Heart left ventricle (tissue), 16 donors: ENCODE measurements at regions of chr2 and their contacts with region 1.

Region 1: DNA sequence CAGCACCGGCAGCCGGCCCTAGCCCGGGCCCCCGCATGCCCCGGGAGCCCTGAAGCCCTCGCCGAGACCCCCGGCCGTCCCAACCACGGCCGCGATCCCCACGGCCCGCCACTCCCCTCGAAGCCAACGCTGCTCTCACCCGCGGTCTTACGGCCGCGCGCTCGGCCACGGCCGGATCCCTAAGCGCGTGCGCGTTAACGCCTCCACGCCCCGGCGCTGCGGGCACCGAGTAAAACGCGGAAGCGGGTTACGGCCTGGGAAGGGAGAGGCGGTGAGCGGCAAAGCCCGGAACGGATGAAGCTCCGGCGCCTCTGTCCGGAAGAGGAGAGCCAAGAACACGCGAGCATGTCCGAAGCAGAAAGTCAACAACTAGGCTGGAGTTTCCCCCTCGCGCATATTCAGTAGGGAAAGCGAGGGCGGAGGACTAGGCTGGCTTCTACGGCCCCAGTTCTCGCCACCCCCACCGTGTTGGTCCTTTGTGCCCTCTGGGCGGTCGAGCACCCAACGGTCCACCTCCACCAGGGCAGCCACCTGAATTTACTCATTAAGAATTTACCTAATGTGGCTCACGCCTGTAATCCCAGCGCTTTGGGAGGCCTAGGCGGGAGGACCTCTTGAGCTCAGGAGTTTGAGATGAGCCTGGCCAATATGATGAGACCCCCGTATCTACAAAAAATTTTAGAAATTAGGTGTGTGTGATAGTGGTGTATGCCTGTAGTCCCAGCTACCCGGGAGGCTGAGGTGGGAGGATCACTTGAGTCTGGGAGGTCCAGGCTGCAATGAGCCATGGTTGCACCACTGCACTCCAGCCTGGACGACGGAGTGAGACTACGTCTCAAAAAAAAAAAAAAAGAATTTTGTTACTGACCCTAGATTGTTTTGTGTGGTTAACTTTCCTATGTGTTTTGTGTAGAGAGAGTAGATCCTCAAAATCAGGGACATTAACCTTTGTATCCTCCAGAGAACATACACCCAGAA is at the start of gene KANSL3:
- DNase-seq: peak; percentile 91 to 96 (median 92)
- ATAC-seq: peak; percentile 81 to 94 (median 88)
- H3K4me3 ChIP-seq: peak within 1 kb of the TSS; percentile 21 to 91 (median 71)
- H3K27ac ChIP-seq: peak within 1 kb of the TSS; percentile 86 to 99 (median 95)
- H3K4me1 ChIP-seq: peaks cover 0 to 42% (median 31%) of the 10 kb centered on the region in 12 donors
- H3K27me3 ChIP-seq: no peaks in the 10 kb centered on the region
- CTCF ChIP-seq: peak in 1 of 12 donors; percentile 4
- POLR2A ChIP-seq: peak; percentile 20 to 69
- total RNA-seq, gene KANSL3: 22.7 to 38.0 (median 30.7) TPM

Region 2: GRCh38 chr2:96536445-96537065 is 101.9 kb before region 1 on chr2 and contains the start of gene ARID5A:
- intact Hi-C with region 1: loop called in 2 of 10 experiments (anchors 5 kb)
- DNase-seq: peak; percentile 95 to 98 (median 96)
- ATAC-seq: peak; percentile 69 to 82 (median 77)
- H3K4me3 ChIP-seq: peak within 1 kb of the TSS; percentile 84 to 99 (median 97)
- H3K27ac ChIP-seq: peak within 1 kb of the TSS; percentile 85 to 100 (median 98)
- H3K4me1 ChIP-seq: peaks cover 22 to 88% (median 74%) of the 10 kb centered on the region in 12 donors
- H3K27me3 ChIP-seq: no peaks in the 10 kb centered on the region
- CTCF ChIP-seq: peak in 10 of 12 donors; percentile 25 to 60 (median 42)
- POLR2A ChIP-seq: peak; percentile 99 to 100
- total RNA-seq, gene ARID5A: 13.3 to 50.2 (median 28.2) TPM

Region 3: DNA sequence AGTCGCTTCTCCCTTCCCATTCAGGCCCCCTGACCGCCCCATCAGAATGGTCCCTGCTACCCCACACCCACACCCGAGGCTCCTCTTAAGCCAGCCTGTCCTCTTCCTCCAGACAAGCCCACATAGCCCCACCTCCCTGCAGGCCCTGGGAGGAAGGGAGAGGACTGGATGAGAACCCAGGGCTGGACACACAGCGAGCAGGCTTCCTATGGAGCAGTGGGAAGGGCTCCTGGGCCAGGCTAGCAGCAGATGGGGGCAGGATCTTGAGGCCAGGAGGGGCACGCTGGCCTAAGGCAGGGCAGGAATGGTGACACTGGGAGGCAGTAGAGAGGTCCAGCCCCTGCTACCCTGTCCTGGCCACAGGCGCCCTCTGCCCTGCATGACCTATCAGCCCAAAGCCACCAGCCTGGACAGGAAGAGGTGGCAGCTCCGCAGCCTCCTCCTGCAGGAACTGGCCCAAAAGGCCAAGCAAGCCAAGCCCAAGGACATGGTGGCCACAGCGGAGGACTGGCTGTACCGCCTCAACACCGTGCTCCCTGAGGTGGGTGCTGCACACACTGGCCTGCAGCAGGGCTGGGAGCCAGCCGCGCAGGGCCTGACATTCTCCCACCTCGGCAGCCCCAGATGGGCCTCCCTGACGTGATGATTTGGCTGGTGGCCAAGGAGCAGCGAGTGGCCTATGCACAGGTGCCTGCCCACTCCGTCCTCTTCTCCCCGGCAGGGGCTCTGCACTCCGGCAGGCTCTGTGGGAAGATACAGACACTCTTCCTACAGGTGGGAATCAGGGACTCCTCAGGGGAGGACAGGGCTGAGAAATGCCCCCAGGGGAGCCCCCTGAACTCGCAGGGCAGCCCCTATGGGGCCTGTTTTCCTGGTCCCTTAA is 47.4 kb after region 1 on chr2:
- intact Hi-C with region 1: no loop called
- DNase-seq: peak in 4 of 5 donors; percentile 36 to 61 (median 48)
- ATAC-seq: peak; percentile 50 to 70 (median 61)
- H3K4me3 ChIP-seq: no peak overlapping the region
- H3K27ac ChIP-seq: no peak overlapping the region
- H3K4me1 ChIP-seq: peaks cover 0 to 15% (median 10%) of the 10 kb centered on the region in 12 donors
- H3K27me3 ChIP-seq: no peaks in the 10 kb centered on the region
- CTCF ChIP-seq: peak in 1 of 12 donors; percentile 6
- POLR2A ChIP-seq: no peak

Region 4: DNA sequence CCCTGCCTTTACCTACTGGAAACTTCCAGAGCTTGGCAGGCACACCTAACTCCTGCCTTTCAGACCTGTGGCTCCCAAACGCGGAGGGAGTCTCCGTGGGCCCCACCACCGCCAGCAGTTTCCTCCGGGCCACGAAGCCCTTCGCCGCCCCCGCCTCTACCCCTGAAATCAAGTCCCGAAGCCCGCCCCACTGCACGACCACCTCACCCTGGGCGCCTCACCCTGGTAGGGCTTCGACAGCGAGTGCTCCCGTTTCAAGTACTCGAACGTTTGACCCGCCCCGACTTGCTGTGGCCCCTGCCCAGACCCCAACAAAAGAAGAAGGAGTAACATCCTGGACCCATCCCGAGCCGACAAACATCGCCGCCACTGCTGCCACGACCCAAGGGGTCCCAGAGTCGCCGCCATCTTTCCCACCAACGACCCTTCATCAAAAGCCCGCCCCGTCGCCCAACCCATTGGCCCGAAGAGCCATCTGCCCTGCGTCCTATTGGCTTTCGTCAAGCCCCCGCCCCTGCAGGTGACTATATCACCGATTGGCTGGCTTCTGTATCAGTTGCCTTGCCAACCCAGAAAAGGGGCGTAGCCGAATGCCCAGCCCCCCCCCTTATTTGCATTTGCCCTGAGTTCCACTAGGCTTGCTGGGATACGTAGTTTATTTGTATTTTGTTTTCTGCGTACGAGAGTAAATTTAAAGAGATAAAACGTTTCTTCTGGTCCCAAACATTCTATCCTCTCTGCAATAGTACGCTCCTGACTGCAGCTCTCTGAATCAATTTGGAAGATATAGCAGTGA is 101.4 kb after region 1 on chr2 and contains the start of gene LMAN2L:
- intact Hi-C with region 1: loop called (anchors 5 to 10 kb)
- DNase-seq: peak; percentile 97 to 99 (median 99)
- ATAC-seq: peak; percentile 99 to 100 (median 99)
- H3K4me3 ChIP-seq: peak within 1 kb of the TSS; percentile 61 to 96 (median 79)
- H3K27ac ChIP-seq: peak within 1 kb of the TSS in 11 of 12 donors; percentile 60 to 80 (median 75)
- H3K4me1 ChIP-seq: peaks cover 0 to 40% (median 26%) of the 10 kb centered on the region in 12 donors
- H3K27me3 ChIP-seq: no peaks in the 10 kb centered on the region
- CTCF ChIP-seq: no peak
- POLR2A ChIP-seq: no peak
- total RNA-seq, gene LMAN2L: 15.1 to 27.8 (median 20.5) TPM

Region 5: DNA sequence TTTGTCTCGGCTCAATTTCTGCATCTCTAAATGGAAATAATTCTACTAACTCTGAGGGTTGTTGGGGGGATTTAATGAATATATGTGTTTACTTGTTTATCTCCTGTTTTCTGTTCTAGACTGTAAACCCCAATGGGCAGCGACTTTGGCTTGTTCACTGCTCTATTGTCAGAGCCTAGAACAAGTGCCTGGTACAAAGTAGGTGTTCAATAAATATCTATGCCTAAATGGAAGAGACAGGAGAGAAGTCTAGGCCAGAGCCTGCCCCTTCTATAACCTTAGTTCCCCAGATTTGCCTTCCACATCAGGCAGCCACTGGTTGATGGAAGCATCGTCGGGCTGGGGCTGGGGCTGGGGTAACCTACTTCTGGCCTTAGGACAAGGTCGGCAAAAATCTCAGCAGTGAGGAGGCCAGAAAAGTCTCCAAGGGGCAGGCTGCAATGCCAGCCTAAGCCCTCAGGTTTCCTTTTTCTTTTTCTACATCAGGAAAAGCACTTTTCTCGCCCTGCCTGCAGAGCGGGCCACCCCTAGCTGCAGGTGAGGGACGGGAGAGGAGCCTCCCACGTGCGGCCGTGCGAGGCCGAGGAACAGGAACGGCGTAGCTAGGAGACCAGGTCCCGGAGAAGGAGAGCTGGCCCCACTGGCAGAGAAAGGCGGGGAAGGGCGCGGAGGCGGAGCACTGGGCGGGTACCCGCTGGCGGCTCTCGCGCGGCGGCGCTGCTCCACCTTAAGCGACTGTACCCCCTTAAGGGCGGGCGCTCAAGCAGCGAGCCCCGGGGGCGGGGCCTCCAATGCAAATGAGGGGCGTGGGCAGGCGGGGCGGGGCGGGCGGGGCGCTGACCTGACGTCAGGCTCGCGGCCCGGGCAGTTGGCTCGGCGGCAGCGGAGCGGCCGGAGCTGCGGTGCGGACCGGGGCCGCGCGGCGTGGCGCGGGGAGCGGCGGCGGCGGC is 121.9 kb after region 1 on chr2 and contains the start of gene CNNM4:
- intact Hi-C with region 1: loop called in 3 of 10 experiments (anchors 1 to 10 kb)
- DNase-seq: peak; percentile 93 to 98 (median 96)
- ATAC-seq: peak; percentile 92 to 97 (median 96)
- H3K4me3 ChIP-seq: peak within 1 kb of the TSS; percentile 62 to 91 (median 75)
- H3K27ac ChIP-seq: peak within 1 kb of the TSS; percentile 33 to 89 (median 78)
- H3K4me1 ChIP-seq: peaks cover 0 to 49% (median 38%) of the 10 kb centered on the region in 12 donors
- H3K27me3 ChIP-seq: no peaks in the 10 kb centered on the region
- CTCF ChIP-seq: peak in 1 of 12 donors; percentile 11
- POLR2A ChIP-seq: no peak
- total RNA-seq, gene CNNM4: 13.1 to 47.7 (median 28.7) TPM

Region 6: GRCh38 chr2:96816128-96816835 is 177.8 kb after region 1 on chr2 and contains the start of gene CNNM3:
- intact Hi-C with region 1: loop called in 1 of 10 experiments (anchors 10 kb)
- DNase-seq: peak; percentile 97 to 99 (median 98)
- ATAC-seq: peak; percentile 91 to 95 (median 94)
- H3K4me3 ChIP-seq: peak within 1 kb of the TSS; percentile 61 to 98 (median 82)
- H3K27ac ChIP-seq: peak within 1 kb of the TSS; percentile 90 to 99 (median 97)
- H3K4me1 ChIP-seq: peaks cover 3 to 70% (median 60%) of the 10 kb centered on the region in 12 donors
- H3K27me3 ChIP-seq: no peaks in the 10 kb centered on the region
- CTCF ChIP-seq: peak; percentile 56 to 91 (median 72)
- POLR2A ChIP-seq: peak in 1 of 2 donors; percentile 90
- total RNA-seq, gene CNNM3: 6.6 to 17.7 (median 10.6) TPM

Region 7: GRCh38 chr2:96960153-96960961 is 321.9 kb after region 1 on chr2:
- intact Hi-C with region 1: loop called in 1 of 10 experiments (anchors 5 kb)
- DNase-seq: peak; percentile 89 to 94 (median 90)
- ATAC-seq: peak; percentile 93 to 98 (median 96)
- H3K4me3 ChIP-seq: no peak overlapping the region
- H3K27ac ChIP-seq: no peak overlapping the region
- H3K4me1 ChIP-seq: no peaks in the 10 kb centered on the region
- H3K27me3 ChIP-seq: no peaks in the 10 kb centered on the region
- CTCF ChIP-seq: peak; percentile 86 to 97 (median 92)
- POLR2A ChIP-seq: no peak